Naive thymus-derived CD4-positive, alpha-beta T cell (primary cell): ENCODE measurements at regions of chr1 and their contacts with region 1.

Region 1: DNA sequence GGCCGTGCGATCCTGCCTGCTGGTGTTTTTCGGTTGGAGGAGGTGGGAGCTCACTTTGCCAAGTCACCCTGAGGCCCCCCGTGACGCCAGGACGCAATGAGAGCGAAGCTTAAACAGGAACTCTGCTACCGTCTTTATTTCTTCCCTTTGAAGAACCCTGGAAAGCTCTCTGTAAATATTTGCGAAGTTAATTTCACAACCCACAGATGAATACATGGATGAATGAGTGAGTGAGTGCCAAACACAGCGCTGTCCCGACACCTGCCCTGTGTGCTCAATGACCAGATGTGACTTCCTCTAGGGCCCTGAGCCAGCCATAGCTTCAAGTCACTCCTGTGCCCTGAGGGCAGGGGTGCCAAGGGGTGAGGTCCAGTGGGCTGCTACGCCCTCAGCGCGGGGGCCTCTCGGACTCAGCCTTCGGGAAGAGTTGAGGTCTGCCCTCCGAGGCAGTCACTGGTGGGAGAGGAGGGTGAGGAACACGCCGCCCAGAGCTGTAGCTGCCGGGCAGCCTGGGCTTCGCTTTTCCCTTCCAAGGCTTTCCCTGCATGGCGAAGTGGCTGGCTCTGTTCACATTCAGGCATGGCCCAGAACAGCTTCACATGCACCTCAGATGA is 42.9 kb upstream of the C1orf174 start:
- DNase-seq: no peak
- ATAC-seq: no peak
- H3K4me3 ChIP-seq: no peak overlapping the region
- H3K4me3 Mint-ChIP-seq: no peak overlapping the region
- H3K27ac ChIP-seq: no peak overlapping the region
- H3K27ac Mint-ChIP-seq: no peak overlapping the region
- H3K4me1 ChIP-seq: no peaks in the 10 kb centered on the region
- H3K4me1 Mint-ChIP-seq: peaks cover 0 to 1% (median 0%) of the 10 kb centered on the region in 7 donors
- H3K27me3 ChIP-seq: no peaks in the 10 kb centered on the region
- H3K27me3 Mint-ChIP-seq: peaks cover 0 to 55% (median 24%) of the 10 kb centered on the region in 5 donors

Region 2: DNA sequence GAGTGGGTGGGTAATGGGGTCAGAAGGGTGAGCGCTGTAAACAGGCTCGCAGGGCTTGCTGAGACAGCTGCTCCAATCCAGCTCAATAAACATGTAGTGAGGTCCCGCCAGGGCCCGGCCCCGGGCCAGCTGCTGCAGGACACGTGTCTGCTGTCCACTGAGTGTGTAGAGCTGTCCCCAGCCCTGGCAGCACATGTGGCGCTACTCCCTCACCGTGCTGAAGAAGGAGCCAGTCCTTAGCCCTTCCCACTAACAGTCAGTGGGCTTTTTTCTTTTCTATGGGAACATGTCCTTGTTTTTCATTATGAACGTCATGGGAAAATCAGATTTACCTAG is 36.0 kb after region 1 on chr1:
- CTCF ChIA-PET with region 1: no interaction called
- POLR2A ChIA-PET with region 1: no interaction called
- intact Hi-C with region 1: loop called in 1 of 2 experiments (anchors 2 kb)
- DNase-seq: no peak
- ATAC-seq: no peak
- H3K4me3 ChIP-seq: no peak overlapping the region
- H3K4me3 Mint-ChIP-seq: no peak overlapping the region
- H3K27ac ChIP-seq: no peak overlapping the region
- H3K27ac Mint-ChIP-seq: no peak overlapping the region
- H3K4me1 ChIP-seq: no peaks in the 10 kb centered on the region
- H3K4me1 Mint-ChIP-seq: peaks cover 0 to 1% (median 0%) of the 10 kb centered on the region in 7 donors
- H3K27me3 ChIP-seq: no peaks in the 10 kb centered on the region
- H3K27me3 Mint-ChIP-seq: peaks cover 0 to 31% (median 23%) of the 10 kb centered on the region in 5 donors